AG04450 (cell line): ENCODE measurements at regions of chr9 and their contacts with region 1.

Region 1: GRCh38 chr9:32843295-32843694 is 60.0 kb downstream of the TMEM215 start:
- DNase-seq: no peak
- H3K4me3 ChIP-seq: no peak overlapping the region
- H3K27ac ChIP-seq: no peak overlapping the region
- H3K27me3 ChIP-seq: no peaks in the 10 kb centered on the region
- CTCF ChIP-seq: no peak

Region 2: DNA sequence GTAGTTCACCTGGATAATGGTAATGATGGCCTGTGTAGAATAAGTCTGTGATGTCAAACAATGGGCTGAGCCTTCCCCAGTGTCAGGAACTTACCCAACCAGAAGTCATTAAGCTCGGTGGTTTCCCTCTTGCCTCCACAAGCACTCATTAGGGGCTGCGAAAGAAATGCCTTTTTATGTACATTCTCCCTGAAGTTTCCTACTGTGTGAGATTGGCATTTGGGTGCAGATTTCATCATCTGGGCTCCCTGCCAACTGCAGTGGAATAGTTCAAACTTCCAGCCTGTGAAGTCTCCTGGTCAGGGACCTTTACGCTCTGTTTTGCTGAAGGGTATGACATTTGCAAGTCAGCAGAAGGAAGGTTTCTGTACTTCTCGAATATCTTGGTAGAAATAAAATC is 101.6 kb before region 1 on chr9:
- CTCF ChIA-PET with region 1: no interaction called
- POLR2A ChIA-PET with region 1: no interaction called
- DNase-seq: no peak
- H3K4me3 ChIP-seq: no peak overlapping the region
- H3K27ac ChIP-seq: no peak overlapping the region
- H3K27me3 ChIP-seq: no peaks in the 10 kb centered on the region
- CTCF ChIP-seq: no peak

Region 3: DNA sequence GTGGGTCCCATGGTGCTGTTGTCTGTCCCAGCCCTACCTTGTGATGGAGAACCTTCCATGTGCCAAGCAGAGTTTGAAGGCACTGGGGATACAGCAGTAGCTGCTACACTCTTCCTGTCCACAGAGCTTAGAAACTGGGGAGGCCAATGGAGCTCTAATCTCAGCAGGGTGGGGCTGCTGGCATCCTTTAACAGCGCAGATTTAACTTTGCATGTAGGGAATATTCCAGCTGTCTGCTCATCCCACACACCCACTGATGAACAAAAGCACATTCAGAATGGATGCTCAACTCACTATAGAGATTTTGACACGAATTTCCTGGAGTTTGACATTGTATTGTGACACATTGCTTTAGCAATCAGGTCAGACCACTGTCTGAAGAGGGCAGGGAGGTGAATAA is 11.0 kb before region 1 on chr9:
- CTCF ChIA-PET with region 1: no interaction called
- POLR2A ChIA-PET with region 1: no interaction called
- DNase-seq: no peak
- H3K4me3 ChIP-seq: no peak overlapping the region
- H3K27ac ChIP-seq: no peak overlapping the region
- H3K27me3 ChIP-seq: peaks cover 3% of the 10 kb centered on the region
- CTCF ChIP-seq: no peak

Region 4: DNA sequence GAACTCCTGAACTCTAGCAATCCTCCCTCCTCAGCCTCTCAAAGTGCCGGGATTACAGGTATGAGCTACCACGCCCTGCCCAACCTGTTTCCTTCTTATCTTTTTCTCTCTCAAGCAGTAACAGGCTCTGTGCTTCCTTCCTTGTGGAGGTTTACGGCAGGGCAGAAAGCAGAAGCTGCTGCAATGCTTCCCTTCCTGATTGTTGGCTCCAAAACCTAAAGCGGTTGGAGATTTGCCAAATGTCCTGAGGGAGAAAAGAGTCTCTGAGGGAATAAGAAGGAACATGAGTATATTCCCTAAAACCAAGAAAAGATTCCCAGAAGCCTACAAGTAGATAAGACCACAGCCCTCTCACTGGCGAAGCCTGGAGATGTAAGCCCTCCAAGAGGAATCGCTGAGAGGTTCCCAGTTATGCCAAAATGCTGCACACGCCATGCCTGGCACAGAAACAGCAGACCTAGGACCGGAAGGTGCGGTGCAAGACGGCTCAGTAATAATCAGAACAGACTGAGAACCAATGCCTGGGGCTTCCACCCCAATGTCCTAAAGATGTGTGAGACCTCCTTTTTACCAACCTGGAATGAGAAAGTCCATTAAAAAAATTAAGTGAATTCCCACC is 85.0 kb after region 1 on chr9:
- CTCF ChIA-PET with region 1: interaction called, 16 read pairs
- POLR2A ChIA-PET with region 1: no interaction called
- DNase-seq: no peak
- H3K4me3 ChIP-seq: no peak overlapping the region
- H3K27ac ChIP-seq: no peak overlapping the region
- H3K27me3 ChIP-seq: peaks cover 10% of the 10 kb centered on the region
- CTCF ChIP-seq: no peak